Stomach (tissue), 19 donors: ENCODE measurements at regions of chr2 and their contacts with region 1.

Region 1: GRCh38 chr2:135762022-135762421 is 20.4 kb downstream of the UBXN4 start:
- DNase-seq: no peak
- H3K4me3 ChIP-seq: no peak overlapping the region
- H3K27ac ChIP-seq: no peak overlapping the region
- H3K4me1 ChIP-seq: no peaks in the 10 kb centered on the region
- H3K27me3 ChIP-seq: no peaks in the 10 kb centered on the region
- CTCF ChIP-seq: no peak
- EP300 ChIP-seq: no peak
- POLR2A ChIP-seq: no peak

Region 2: DNA sequence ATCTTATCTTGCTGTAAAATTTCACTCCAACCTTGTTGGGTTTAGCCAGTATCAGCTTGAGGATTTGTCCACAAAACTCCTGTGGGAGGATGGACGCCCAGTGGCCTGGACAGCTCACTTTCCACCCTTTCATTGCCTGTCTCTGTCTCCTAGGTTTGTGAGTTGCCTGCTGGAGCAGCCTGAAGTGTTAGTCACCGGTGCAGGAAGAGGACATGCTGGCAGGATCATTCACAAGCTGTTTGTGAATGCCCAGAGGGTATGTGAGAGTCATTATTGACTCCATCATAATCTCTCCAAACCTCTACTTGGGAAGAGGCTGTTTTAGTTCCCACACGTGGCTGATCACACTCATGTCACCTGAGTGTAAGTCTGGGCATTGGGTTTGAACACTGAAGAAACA is 597.6 kb before region 1 on chr2:
- intact Hi-C with region 1: loop called (anchors 5 kb)
- DNase-seq: no peak
- H3K4me3 ChIP-seq: no peak overlapping the region
- H3K27ac ChIP-seq: no peak overlapping the region
- H3K4me1 ChIP-seq: peaks cover 0 to 13% (median 0%) of the 10 kb centered on the region in 4 donors
- H3K27me3 ChIP-seq: no peaks in the 10 kb centered on the region
- CTCF ChIP-seq: no peak
- EP300 ChIP-seq: no peak
- POLR2A ChIP-seq: no peak

Region 3: GRCh38 chr2:136052369-136053362 is 290.6 kb after region 1 on chr2:
- intact Hi-C with region 1: no loop called
- DNase-seq: no peak
- H3K4me3 ChIP-seq: no peak overlapping the region
- H3K27ac ChIP-seq: no peak overlapping the region
- H3K4me1 ChIP-seq: no peaks in the 10 kb centered on the region
- H3K27me3 ChIP-seq: no peaks in the 10 kb centered on the region
- CTCF ChIP-seq: no peak
- EP300 ChIP-seq: no peak
- POLR2A ChIP-seq: no peak